Testis (tissue), 5 donors: ENCODE measurements at regions of chr5 and their contacts with region 1.

Region 1: GRCh38 chr5:135551593-135552447 is 16.1 kb upstream of the NEUROG1 start:
- DNase-seq: peak; percentile 88
- H3K4me3 ChIP-seq: no peak overlapping the region
- H3K27ac ChIP-seq: no peak overlapping the region
- H3K4me1 ChIP-seq: no peaks in the 10 kb centered on the region
- H3K27me3 ChIP-seq: no peaks in the 10 kb centered on the region
- CTCF ChIP-seq: peak; percentile 79 to 87 (median 80)
- POLR2A ChIP-seq: no peak

Region 2: GRCh38 chr5:135466178-135467050 is 85.4 kb before region 1 on chr5:
- intact Hi-C with region 1: loop called (anchors 5 kb)
- DNase-seq: peak; percentile 85
- H3K4me3 ChIP-seq: peak overlapping the region; percentile 29 to 31
- H3K27ac ChIP-seq: no peak overlapping the region
- H3K4me1 ChIP-seq: no peaks in the 10 kb centered on the region
- H3K27me3 ChIP-seq: no peaks in the 10 kb centered on the region
- CTCF ChIP-seq: peak; percentile 56 to 78 (median 72)
- POLR2A ChIP-seq: no peak

Region 3: GRCh38 chr5:135599421-135600151 is 47.8 kb after region 1 on chr5:
- intact Hi-C with region 1: no loop called
- DNase-seq: no peak
- H3K4me3 ChIP-seq: no peak overlapping the region
- H3K27ac ChIP-seq: no peak overlapping the region
- H3K4me1 ChIP-seq: no peaks in the 10 kb centered on the region
- H3K27me3 ChIP-seq: no peaks in the 10 kb centered on the region
- CTCF ChIP-seq: no peak
- POLR2A ChIP-seq: no peak